MCF 10A (cell line): ENCODE measurements at regions of chr11 and their contacts with region 1.

Region 1: GRCh38 chr11:67442504-67443405 is 521 bp downstream of the CORO1B start:
- DNase-seq: no peak
- H3K4me3 Mint-ChIP-seq: peak overlapping the region; percentile 82
- H3K27ac Mint-ChIP-seq: peak overlapping the region; percentile 63
- H3K4me1 Mint-ChIP-seq: peaks cover 17% of the 10 kb centered on the region
- H3K27me3 Mint-ChIP-seq: no peaks in the 10 kb centered on the region
- CTCF ChIP-seq: no peak

Region 2: DNA sequence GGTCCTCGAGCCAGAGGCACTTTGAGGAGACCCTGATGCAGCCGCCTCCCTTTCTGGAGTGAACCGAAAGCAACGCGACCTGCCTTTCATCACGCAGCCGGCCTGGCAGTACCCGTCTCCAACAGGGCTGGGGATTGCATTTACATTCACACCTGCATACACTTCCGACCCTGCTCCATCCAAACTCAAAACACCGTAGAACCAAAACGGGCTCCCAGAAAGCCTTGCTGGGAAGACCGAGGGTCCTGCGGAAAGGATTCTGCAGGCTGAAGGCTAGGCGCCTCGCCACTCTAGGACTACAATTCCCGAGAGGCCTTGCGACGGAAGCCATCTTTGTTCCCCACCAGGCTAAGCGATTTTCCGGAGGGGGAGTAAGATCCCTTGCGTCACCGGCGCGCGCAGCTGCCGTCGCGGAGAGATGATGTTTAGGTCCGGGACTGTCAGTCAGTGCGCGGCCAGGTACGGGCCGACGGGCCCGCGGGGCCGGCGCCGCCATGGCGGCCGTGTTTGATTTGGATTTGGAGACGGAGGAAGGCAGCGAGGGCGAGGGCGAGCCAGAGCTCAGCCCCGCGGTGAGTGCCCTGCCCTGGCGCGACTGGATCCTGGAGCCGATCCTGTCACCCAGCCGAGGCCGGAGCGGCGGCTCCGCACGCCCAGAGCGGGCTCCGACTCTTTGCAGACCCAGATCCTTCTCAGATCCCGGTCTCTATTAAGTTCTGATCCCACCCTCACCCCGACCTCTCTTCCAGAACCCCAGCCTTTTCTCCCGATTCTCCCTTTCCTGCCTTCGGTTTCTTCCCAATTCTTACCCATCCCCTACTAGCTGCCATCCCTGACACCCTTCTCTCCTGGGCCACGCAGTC is 14.5 kb before region 1 on chr11 and contains the start of gene RPS6KB2:
- CTCF ChIA-PET with region 1: no interaction called
- POLR2A ChIA-PET with region 1: interaction called, 13 read pairs
- intact Hi-C with region 1: no loop called
- DNase-seq: peak; percentile 97
- H3K4me3 Mint-ChIP-seq: peak within 1 kb of the TSS; percentile 96
- H3K27ac Mint-ChIP-seq: peak within 1 kb of the TSS; percentile 92
- H3K4me1 Mint-ChIP-seq: peaks cover under 1% of the 10 kb centered on the region
- H3K27me3 Mint-ChIP-seq: no peaks in the 10 kb centered on the region
- CTCF ChIP-seq: no peak
- total RNA-seq, gene RPS6KB2: 49.8 and 60.1 TPM in 2 replicates